WTC11 (cell line): ENCODE measurements at regions of chr7 and their contacts with region 1.

Region 1: DNA sequence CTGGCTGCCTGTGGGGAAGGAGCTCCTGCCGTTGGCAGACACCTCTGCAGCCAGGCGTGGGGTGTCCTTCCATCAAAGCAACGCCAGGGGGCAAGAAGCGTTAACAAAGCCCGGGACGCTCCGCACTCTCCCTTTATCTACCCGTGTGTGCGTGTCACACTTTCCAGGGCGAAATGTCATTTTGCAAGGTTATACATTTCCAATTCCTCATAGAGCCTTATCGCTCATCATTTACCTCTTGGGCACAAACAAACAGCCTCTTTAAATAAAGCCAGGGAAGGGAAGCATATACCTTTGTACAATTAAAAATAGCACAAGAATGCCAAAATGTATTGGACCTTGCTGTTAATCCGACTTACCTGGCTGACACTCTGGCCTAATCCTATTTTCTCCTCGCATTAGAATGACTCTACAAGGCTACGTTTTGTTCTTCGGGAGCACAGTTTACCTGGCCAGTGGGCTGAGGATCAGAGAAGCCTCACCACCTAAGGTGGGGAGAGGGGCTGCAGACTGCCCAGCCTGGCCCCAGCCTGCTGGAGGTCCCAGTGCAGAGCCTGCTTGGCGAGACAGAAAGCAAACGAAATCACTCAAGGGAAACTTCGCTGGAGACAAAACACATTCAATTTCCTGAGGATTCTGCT is 77.6 kb upstream of the EN2 start:
- DNase-seq: peak; percentile 84
- ATAC-seq: peak; percentile 49
- H3K4me3 Mint-ChIP-seq: no peak overlapping the region
- H3K27ac Mint-ChIP-seq: no peak overlapping the region
- H3K4me1 Mint-ChIP-seq: peaks cover 33% of the 10 kb centered on the region
- H3K27me3 Mint-ChIP-seq: peaks cover 100% of the 10 kb centered on the region
- CTCF ChIP-seq: peak; percentile 78

Region 2: DNA sequence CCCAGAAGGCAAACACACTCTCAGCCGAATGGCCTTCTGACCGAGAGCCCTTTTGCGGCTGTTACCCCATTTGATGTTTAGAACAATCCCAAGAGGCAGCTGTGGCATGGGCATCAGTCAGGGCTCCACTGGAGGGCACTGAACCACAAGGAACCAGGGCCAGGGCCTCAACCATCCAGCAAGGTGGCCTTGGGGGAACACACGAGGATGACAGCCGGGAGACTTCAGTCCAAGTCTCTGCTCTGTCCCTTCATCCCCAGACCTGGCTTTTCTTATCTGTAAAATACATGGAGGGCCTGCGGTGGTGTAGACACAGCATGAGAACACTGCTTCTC is 146.2 kb before region 1 on chr7:
- CTCF ChIA-PET with region 1: no interaction called
- POLR2A ChIA-PET with region 1: no interaction called
- DNase-seq: no peak
- ATAC-seq: no peak
- H3K4me3 Mint-ChIP-seq: no peak overlapping the region
- H3K27ac Mint-ChIP-seq: no peak overlapping the region
- H3K4me1 Mint-ChIP-seq: peaks cover 9% of the 10 kb centered on the region
- H3K27me3 Mint-ChIP-seq: peaks cover 9% of the 10 kb centered on the region
- CTCF ChIP-seq: no peak

Region 3: GRCh38 chr7:155448632-155449007 is 68.3 kb after region 1 on chr7:
- CTCF ChIA-PET with region 1: interaction called, 34 read pairs
- POLR2A ChIA-PET with region 1: no interaction called
- DNase-seq: peak; percentile 59
- ATAC-seq: peak; percentile 32
- H3K4me3 Mint-ChIP-seq: peak overlapping the region; percentile 64
- H3K27ac Mint-ChIP-seq: no peak overlapping the region
- H3K4me1 Mint-ChIP-seq: peaks cover 28% of the 10 kb centered on the region
- H3K27me3 Mint-ChIP-seq: peaks cover 100% of the 10 kb centered on the region
- CTCF ChIP-seq: no peak

Region 4: DNA sequence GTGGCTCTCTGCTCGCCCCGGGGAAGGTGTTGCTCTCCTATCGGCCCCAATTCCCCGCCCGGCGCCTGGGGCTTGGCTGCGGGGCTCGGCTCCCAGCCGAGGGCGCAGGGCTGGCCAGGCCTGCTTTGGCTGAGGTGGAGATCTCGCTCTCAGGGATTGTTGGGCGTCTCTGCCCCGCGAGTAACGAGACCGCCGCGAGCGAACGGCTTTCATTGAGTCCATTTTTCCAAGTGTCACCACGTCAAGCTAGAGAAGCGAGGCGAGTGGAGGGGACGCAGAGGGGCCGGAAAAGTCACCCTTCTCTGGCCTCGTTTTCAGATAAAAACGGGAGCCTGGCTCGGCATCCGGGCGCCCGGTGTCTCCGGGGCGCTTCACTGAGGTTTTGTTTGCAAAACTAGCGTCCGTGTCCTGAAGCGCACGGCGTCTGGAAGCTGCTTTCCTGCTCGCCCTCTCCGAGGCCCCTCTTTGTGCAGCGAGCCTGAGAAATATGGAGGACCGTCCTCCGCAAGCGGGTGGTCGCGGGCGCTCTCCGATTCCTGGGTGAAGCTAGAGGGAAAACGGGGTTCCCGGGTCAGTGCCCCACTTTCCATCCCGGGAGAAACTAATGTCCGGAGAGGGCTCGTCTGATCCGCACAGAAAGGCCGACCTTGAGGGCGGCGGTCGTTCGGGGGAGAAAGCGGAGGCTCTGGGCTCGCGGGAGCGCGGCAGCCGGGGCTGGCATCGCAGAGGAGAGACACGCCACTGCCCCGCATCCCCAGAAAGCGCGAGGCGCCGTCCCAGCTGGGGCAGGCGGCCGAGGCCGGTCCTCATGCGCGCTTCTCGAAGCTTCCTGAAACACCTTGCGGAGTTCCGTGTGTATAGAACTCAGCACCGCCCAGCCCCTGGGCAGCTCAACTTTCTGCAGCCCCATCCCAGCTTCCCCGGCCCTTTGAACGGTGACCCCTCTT is 74.1 kb after region 1 on chr7:
- CTCF ChIA-PET with region 1: interaction called, 34 read pairs
- POLR2A ChIA-PET with region 1: no interaction called
- DNase-seq: no peak
- ATAC-seq: 0 out of 2 replicates have a peak, but pooled peaks have one; percentile 1
- H3K4me3 Mint-ChIP-seq: peak overlapping the region; percentile 48
- H3K27ac Mint-ChIP-seq: no peak overlapping the region
- H3K4me1 Mint-ChIP-seq: peaks cover 35% of the 10 kb centered on the region
- H3K27me3 Mint-ChIP-seq: peaks cover 96% of the 10 kb centered on the region
- CTCF ChIP-seq: no peak